Mammary epithelial cell (primary cell): ENCODE measurements at regions of chr3 and their contacts with region 1.

Region 1: DNA sequence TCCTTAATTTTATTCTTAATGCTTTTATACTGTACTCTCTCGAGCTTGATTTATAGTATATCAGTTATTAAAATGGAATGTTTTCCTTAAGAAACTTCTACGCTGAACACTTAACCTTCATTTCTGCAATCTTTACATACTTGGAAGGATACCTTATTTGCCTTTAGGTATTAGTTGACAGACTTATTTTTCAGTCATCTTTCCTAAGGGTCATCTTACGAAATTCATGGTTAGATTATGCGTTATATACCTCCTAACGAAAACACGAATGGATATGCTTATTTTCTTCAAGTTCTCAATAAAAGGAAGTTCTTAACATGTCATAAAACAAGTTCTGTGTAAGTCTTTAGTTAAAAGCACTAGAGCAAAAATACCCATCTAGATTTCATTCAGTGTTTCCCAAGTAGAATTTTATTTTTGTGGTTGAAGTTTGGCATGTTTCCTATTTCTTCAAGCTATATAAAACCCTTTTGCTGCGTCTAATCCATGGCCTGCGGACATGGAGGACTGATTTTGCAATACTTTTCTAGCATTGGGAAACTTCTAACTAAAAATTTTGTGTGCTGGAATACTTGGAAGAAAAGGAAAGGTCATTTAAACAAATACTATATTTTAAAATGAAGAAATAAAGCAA is 231.3 kb downstream of the TP63 start:
- DNase-seq: peak; percentile 76
- H3K4me3 ChIP-seq: peak overlapping the region in 1 of 3 experiments; percentile 2
- H3K27ac ChIP-seq: peak overlapping the region; percentile 86
- H3K4me1 ChIP-seq: peaks cover 34% of the 10 kb centered on the region
- H3K27me3 ChIP-seq: no peaks in the 10 kb centered on the region
- CTCF ChIP-seq: no peak

Region 2: GRCh38 chr3:189824629-189825312 is 37.7 kb before region 1 on chr3:
- CTCF ChIA-PET with region 1: no interaction called
- dilution Hi-C with region 1: no loop called
- in situ Hi-C with region 1: no loop called
- intact Hi-C with region 1: loop called (anchors 2 kb)
- DNase-seq: peak; percentile 97
- H3K4me3 ChIP-seq: peak overlapping the region in 2 of 3 experiments; percentile 27 to 31
- H3K27ac ChIP-seq: peak overlapping the region; percentile 98
- H3K4me1 ChIP-seq: peaks cover 48% of the 10 kb centered on the region
- H3K27me3 ChIP-seq: no peaks in the 10 kb centered on the region
- CTCF ChIP-seq: no peak

Region 3: GRCh38 chr3:189841473-189842210 is 20.9 kb before region 1 on chr3:
- CTCF ChIA-PET with region 1: no interaction called
- dilution Hi-C with region 1: no loop called
- in situ Hi-C with region 1: no loop called
- intact Hi-C with region 1: no loop called
- DNase-seq: peak; percentile 98
- H3K4me3 ChIP-seq: peak overlapping the region in 2 of 3 experiments; percentile 6 to 22
- H3K27ac ChIP-seq: peak overlapping the region; percentile 99
- H3K4me1 ChIP-seq: peaks cover 67% of the 10 kb centered on the region
- H3K27me3 ChIP-seq: no peaks in the 10 kb centered on the region
- CTCF ChIP-seq: no peak